ENCODE measurements at regions of chr2 and their contacts with region 1.

Region 1: GRCh38 chr2:201231781-201232466 is 28.4 kb upstream of the CASP8 start:
- DNase-seq: peak; percentile 96
- ATAC-seq: peak; percentile 47
- H3K4me3 Mint-ChIP-seq: peak overlapping the region; percentile 68
- H3K27ac Mint-ChIP-seq: peak overlapping the region; percentile 78
- H3K4me1 Mint-ChIP-seq: peaks cover 49% of the 10 kb centered on the region
- H3K27me3 Mint-ChIP-seq: no peaks in the 10 kb centered on the region

Region 2: GRCh38 chr2:200811336-200812121 is 420.4 kb before region 1 on chr2 and contains the start of gene BZW1:
- CTCF ChIA-PET with region 1: no interaction called
- POLR2A ChIA-PET with region 1: no interaction called
- intact Hi-C with region 1: loop called in 1 of 2 experiments (anchors 2 kb)
- DNase-seq: peak; percentile 98
- ATAC-seq: peak; percentile 79
- H3K4me3 Mint-ChIP-seq: peak within 1 kb of the TSS; percentile 87
- H3K27ac Mint-ChIP-seq: peak within 1 kb of the TSS; percentile 96
- H3K4me1 Mint-ChIP-seq: peaks cover 45% of the 10 kb centered on the region
- H3K27me3 Mint-ChIP-seq: no peaks in the 10 kb centered on the region
- total RNA-seq, gene BZW1: 413 to 474 TPM

Region 3: DNA sequence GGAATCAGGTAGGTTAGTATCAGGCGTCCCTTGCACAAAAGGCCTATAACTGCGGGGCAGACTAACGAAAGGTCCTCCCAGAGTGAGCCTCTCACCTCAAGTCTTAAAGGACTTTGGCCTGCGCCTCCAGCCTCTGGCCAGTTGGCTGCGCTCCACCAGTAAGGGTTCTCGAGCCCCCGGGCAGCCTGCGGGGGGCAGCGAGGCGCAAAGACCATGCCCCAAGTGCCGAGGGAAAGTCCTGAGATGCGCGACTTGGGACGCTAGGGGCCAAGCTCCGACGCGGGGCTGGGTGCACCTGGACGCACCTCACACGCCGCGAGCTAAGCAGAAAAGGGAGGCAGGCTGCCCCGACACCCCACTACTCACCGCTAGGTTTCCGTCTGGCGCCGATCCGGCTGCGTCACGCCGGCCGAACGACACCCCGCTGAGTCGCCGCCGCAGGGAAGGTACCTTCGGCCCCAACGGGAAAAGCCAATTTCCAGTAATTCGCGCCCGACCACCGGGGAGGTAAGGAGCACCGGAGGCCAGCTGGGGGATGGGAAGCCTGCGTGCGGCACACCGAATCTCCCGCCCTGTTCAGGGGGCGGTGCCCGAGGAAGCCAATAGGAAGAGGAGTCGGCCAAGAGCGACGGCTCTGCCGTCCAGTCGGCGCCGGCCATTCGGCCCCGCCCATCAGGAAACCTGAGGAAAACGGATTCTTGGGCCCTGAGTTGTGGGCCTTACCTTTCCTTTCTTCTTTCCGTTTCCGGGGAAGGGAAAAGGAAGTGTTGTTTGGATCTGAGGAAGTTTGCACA is 268.6 kb before region 1 on chr2 and contains the start of gene ORC2:
- CTCF ChIA-PET with region 1: interaction called, 5 read pairs
- POLR2A ChIA-PET with region 1: interaction called, 3 read pairs
- intact Hi-C with region 1: loop called in 1 of 2 experiments (anchors 1 kb)
- DNase-seq: peak; percentile 95
- ATAC-seq: peak; percentile 95
- H3K4me3 Mint-ChIP-seq: peak within 1 kb of the TSS; percentile 92
- H3K27ac Mint-ChIP-seq: peak within 1 kb of the TSS; percentile 96
- H3K4me1 Mint-ChIP-seq: peaks cover 65% of the 10 kb centered on the region
- H3K27me3 Mint-ChIP-seq: no peaks in the 10 kb centered on the region
- total RNA-seq, gene ORC2: 68.5 to 80.5 TPM

Region 4: DNA sequence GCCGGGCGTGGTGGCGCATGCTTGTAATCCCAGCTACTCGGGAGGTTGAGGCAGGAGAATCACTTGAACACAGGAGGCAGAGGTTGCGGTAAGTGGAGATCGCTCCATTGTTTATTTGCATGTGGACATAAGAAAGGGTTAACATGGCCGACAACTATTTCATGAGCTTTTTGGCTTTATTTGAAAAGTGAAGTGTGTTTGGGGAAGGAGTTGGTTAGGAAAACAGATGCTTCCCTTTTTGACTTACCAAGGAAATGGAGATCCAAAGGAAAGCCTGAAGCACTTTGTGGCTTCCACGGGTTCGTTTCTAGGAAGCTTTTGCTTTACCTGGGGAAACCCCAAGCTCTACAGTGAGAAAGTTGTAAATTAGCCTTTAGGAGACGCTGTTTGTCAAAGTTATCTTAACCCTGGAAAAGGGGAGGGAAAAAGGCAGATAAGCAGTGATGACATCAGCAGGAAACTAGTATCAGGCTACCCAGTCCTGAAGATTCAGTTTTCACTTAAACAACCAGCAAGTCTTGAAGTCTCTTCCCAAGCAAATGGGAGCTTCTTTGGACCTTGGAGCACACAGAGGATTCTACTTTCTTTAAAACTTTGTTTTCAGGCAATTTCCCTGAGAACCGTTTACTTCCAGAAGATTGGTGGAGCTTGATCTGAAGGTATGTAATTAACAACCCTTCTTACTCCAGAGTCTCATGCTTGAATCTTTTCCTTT is 49.1 kb before region 1 on chr2 and contains the start of gene CASP10:
- CTCF ChIA-PET with region 1: interaction called, 99 read pairs
- POLR2A ChIA-PET with region 1: interaction called, 17 read pairs
- intact Hi-C with region 1: loop called (anchors 1 kb)
- DNase-seq: no peak
- ATAC-seq: peak; percentile 66
- H3K4me3 Mint-ChIP-seq: peak within 1 kb of the TSS; percentile 86
- H3K27ac Mint-ChIP-seq: peak within 1 kb of the TSS; percentile 96
- H3K4me1 Mint-ChIP-seq: peaks cover 43% of the 10 kb centered on the region
- H3K27me3 Mint-ChIP-seq: no peaks in the 10 kb centered on the region
- total RNA-seq, gene CASP10: 12.2 to 16.8 TPM

Region 5: GRCh38 chr2:201220102-201220570 is 11.8 kb before region 1 on chr2:
- CTCF ChIA-PET with region 1: interaction called, 50 read pairs
- POLR2A ChIA-PET with region 1: no interaction called
- intact Hi-C with region 1: no loop called
- DNase-seq: no peak
- ATAC-seq: no peak
- H3K4me3 Mint-ChIP-seq: no peak overlapping the region
- H3K27ac Mint-ChIP-seq: peak overlapping the region; percentile 49
- H3K4me1 Mint-ChIP-seq: peaks cover 49% of the 10 kb centered on the region
- H3K27me3 Mint-ChIP-seq: no peaks in the 10 kb centered on the region

Region 6: GRCh38 chr2:201275990-201276389 is 44.1 kb after region 1 on chr2:
- CTCF ChIA-PET with region 1: interaction called, 13 read pairs
- POLR2A ChIA-PET with region 1: interaction called, 10 read pairs
- intact Hi-C with region 1: loop called (anchors 5 kb)
- DNase-seq: no peak
- ATAC-seq: no peak
- H3K4me3 Mint-ChIP-seq: no peak overlapping the region
- H3K27ac Mint-ChIP-seq: no peak overlapping the region
- H3K4me1 Mint-ChIP-seq: peaks cover 54% of the 10 kb centered on the region
- H3K27me3 Mint-ChIP-seq: no peaks in the 10 kb centered on the region

Region 7: DNA sequence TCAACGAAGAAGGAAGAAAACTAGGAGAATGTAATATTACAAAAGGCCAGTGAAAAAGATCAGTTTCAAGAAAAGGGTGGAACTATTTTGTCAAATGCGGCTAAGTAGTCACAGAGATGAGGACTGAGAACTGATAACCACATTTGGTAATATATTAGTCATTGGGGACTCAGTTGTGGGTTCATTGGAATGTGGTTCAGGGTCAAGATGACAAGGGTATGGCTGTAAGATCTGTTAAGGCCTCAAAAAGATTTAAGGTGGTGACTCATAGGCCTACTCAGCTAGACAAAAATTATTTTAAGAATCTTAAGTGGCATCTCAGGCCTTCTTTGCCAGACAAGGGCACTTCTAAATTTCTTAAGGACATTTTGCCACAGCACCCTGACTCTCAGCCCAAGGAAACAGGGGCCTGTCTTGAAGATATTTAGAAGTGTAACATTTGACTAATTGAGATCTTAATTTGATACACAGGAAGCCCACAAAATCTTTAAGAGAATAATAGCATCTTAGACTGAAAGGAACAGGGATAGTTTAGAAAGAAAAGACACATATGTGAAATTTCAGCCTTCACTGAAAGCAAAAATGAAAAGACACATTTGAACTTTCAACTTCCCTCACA is 300.9 kb after region 1 on chr2:
- CTCF ChIA-PET with region 1: no interaction called
- POLR2A ChIA-PET with region 1: no interaction called
- intact Hi-C with region 1: no loop called
- DNase-seq: peak; percentile 31
- ATAC-seq: peak; percentile 97
- H3K4me3 Mint-ChIP-seq: no peak overlapping the region
- H3K27ac Mint-ChIP-seq: peak overlapping the region; percentile 64
- H3K4me1 Mint-ChIP-seq: peaks cover 18% of the 10 kb centered on the region
- H3K27me3 Mint-ChIP-seq: no peaks in the 10 kb centered on the region

Region 8: DNA sequence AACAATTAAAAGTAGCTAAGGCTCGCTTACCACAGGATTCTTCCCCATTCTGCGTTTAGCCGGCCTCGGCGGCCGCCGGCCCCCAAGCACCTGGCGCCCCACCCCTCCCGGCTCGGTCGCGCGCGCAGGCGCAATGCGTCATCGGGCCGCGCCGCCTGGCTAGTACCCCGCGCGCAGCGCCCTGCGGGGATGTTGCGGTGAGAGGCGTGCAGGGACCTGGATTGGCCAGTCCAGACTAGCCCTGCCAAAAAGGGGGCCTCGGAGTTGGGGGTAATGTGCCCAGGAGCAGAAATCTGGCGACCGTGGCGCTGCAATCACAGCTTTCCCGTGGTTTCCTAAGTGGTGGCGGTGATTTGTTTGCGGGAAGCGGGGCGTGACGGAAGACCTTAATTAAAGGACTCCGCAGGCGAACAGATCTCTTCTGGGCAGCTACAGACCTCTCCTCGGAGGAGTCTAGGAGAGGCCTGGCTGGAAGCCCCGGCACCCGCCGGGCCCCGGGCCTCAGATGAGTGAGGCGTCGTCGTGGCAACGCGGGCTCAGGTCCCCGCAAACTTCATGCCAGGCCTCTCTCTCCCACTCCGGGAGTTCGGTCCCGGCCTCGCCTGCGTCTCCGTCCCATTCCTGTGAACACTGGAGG is 410.8 kb after region 1 on chr2:
- CTCF ChIA-PET with region 1: no interaction called
- POLR2A ChIA-PET with region 1: interaction called, 3 read pairs
- intact Hi-C with region 1: loop called (anchors 2 to 10 kb)
- DNase-seq: peak; percentile 91
- ATAC-seq: peak; percentile 82
- H3K4me3 Mint-ChIP-seq: peak overlapping the region; percentile 79
- H3K27ac Mint-ChIP-seq: peak overlapping the region; percentile 84
- H3K4me1 Mint-ChIP-seq: peaks cover 9% of the 10 kb centered on the region
- H3K27me3 Mint-ChIP-seq: no peaks in the 10 kb centered on the region

Region 9: GRCh38 chr2:201754717-201755415 is 522.9 kb after region 1 on chr2:
- CTCF ChIA-PET with region 1: no interaction called
- POLR2A ChIA-PET with region 1: no interaction called
- intact Hi-C with region 1: no loop called
- DNase-seq: no peak
- ATAC-seq: no peak
- H3K4me3 Mint-ChIP-seq: no peak overlapping the region
- H3K27ac Mint-ChIP-seq: no peak overlapping the region
- H3K4me1 Mint-ChIP-seq: no peaks in the 10 kb centered on the region
- H3K27me3 Mint-ChIP-seq: no peaks in the 10 kb centered on the region

Region 10: GRCh38 chr2:201955702-201956141 is 723.8 kb after region 1 on chr2:
- CTCF ChIA-PET with region 1: no interaction called
- POLR2A ChIA-PET with region 1: no interaction called
- intact Hi-C with region 1: no loop called
- DNase-seq: no peak
- ATAC-seq: no peak
- H3K4me3 Mint-ChIP-seq: no peak overlapping the region
- H3K27ac Mint-ChIP-seq: no peak overlapping the region
- H3K4me1 Mint-ChIP-seq: no peaks in the 10 kb centered on the region
- H3K27me3 Mint-ChIP-seq: peaks cover 15% of the 10 kb centered on the region